CD14-positive monocyte (primary cell): ENCODE measurements at regions of chr17 and their contacts with region 1.

Region 1: DNA sequence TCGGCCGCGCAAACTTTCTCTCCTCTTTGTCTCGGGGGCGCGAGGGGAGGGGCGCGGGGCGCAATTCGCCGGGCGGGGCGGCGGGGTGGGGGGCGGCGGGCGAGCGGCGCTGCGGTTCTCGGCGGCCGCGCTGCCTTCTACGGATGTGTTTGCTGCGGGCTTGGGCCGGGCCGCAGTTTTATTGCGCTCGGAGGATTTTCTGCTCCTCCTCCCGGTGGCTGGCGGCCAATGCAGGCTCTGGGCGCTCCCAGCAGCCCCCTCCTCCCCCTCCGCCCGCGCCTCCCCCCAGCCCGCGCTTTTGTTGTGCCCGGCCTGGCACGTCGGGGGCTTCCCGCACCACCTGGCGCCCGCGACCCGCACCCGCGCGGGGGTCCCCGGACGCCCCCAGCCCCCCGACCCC is at the start of gene TIMP2:
- DNase-seq: peak; percentile 80 to 83 (median 80)
- H3K4me3 ChIP-seq: peak within 1 kb of the TSS; percentile 75 to 96 (median 91)
- H3K4me3 Mint-ChIP-seq: peak within 1 kb of the TSS; percentile 94 to 95
- H3K27ac ChIP-seq: peak within 1 kb of the TSS; percentile 82 to 86
- H3K27ac Mint-ChIP-seq: peak within 1 kb of the TSS; percentile 91 to 98 (median 95)
- H3K4me1 ChIP-seq: peaks cover 40 to 45% of the 10 kb centered on the region in 2 donors
- H3K4me1 Mint-ChIP-seq: peaks cover 42% of the 10 kb centered on the region
- H3K27me3 ChIP-seq: no peaks in the 10 kb centered on the region
- H3K27me3 Mint-ChIP-seq: peaks cover 1 to 5% (median 4%) of the 10 kb centered on the region in 3 donors
- CTCF ChIP-seq: peak; percentile 63
- polyA plus RNA-seq, gene TIMP2: 4.5 to 101 (median 6.4) TPM

Region 2: DNA sequence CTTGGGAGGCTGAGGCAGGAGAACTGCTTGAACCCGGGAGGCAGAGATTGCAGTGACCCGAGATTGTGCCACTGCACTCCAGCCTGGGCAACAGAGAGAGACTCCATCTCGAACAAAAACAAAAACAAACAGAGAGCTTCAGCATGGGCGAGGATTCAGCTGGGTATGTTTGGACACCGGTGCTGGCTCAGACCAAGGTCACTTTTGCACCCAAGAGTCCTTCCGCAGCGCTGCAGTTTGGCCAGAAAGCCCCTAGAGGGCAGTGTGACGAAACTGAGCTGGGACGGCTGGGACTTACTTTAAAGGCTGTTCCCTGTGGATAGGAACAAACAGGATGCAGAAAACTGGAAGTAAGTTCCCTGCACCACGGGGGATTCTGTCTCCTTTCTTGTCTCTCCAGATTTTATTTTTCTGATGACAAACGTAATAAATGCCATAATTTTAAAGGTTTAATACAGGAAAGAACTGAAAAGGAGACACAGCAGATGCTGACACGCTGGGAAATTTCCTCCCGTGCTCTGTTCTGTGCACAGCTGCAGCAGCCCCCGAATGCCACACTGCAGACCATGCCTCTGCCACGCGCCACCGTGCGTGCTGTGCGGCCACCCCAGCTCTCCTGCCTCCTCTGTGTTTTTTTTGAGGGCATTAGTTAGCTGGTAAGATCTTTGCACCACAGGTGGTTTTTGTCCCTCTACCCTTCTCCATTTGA is 59.4 kb before region 1 on chr17:
- intact Hi-C with region 1: loop called (anchors 2 to 5 kb)
- DNase-seq: peak; percentile 64 to 78 (median 78)
- H3K4me3 ChIP-seq: no peak overlapping the region
- H3K4me3 Mint-ChIP-seq: no peak overlapping the region
- H3K27ac ChIP-seq: peak overlapping the region; percentile 81 to 84
- H3K27ac Mint-ChIP-seq: peak overlapping the region; percentile 64 to 96 (median 92)
- H3K4me1 ChIP-seq: peaks cover 41 to 71% of the 10 kb centered on the region in 2 donors
- H3K4me1 Mint-ChIP-seq: peaks cover 50% of the 10 kb centered on the region
- H3K27me3 ChIP-seq: no peaks in the 10 kb centered on the region
- H3K27me3 Mint-ChIP-seq: peaks cover 0 to 2% (median 1%) of the 10 kb centered on the region in 3 donors
- CTCF ChIP-seq: peak; percentile 92

Region 3: GRCh38 chr17:78883164-78884122 is 41.8 kb before region 1 on chr17:
- intact Hi-C with region 1: loop called in 1 of 2 experiments (anchors 5 kb)
- DNase-seq: peak; percentile 96 to 98 (median 97)
- H3K4me3 ChIP-seq: peak overlapping the region in 2 of 3 experiments; percentile 14 to 59
- H3K4me3 Mint-ChIP-seq: peak overlapping the region; percentile 70 to 79
- H3K27ac ChIP-seq: peak overlapping the region; percentile 96 to 98
- H3K27ac Mint-ChIP-seq: peak overlapping the region; percentile 97 to 99 (median 98)
- H3K4me1 ChIP-seq: peaks cover 73 to 89% of the 10 kb centered on the region in 2 donors
- H3K4me1 Mint-ChIP-seq: peaks cover 75% of the 10 kb centered on the region
- H3K27me3 ChIP-seq: no peaks in the 10 kb centered on the region
- H3K27me3 Mint-ChIP-seq: peaks cover 0 to 2% (median 2%) of the 10 kb centered on the region in 3 donors
- CTCF ChIP-seq: peak; percentile 8

Region 4: DNA sequence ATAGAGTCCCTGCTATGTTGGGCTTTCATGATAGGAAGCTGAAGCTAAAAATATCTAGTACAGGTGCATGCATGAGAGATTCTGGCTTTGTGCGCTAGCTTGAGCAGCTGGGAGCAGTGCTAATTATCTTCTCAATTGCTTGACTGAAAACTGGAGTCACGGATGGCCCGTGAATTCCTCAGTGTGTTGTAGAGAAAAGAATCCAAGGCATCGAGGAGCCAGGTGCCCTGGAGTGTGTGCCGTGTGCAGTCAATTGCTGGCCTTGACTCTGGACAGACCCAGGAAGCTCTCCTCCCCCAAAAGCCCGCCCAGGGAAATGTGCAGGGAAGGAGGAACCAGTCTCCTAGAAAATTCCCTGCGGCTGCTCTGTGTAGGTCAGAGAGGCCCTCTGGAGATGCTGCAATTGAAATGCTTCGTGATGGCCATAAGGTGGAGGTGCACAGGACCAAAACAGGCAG is 40.3 kb after region 1 on chr17:
- intact Hi-C with region 1: loop called (anchors 5 kb)
- DNase-seq: no peak
- H3K4me3 ChIP-seq: no peak overlapping the region
- H3K4me3 Mint-ChIP-seq: peak overlapping the region in 1 of 2 donors; percentile 37
- H3K27ac ChIP-seq: no peak overlapping the region
- H3K27ac Mint-ChIP-seq: no peak overlapping the region
- H3K4me1 ChIP-seq: no peaks in the 10 kb centered on the region
- H3K4me1 Mint-ChIP-seq: peaks cover 8% of the 10 kb centered on the region
- H3K27me3 ChIP-seq: no peaks in the 10 kb centered on the region
- H3K27me3 Mint-ChIP-seq: peaks cover 0 to 4% (median 2%) of the 10 kb centered on the region in 3 donors
- CTCF ChIP-seq: no peak

Region 5: GRCh38 chr17:78970834-78971773 is 45.9 kb after region 1 on chr17:
- intact Hi-C with region 1: loop called (anchors 5 kb)
- DNase-seq: peak; percentile 70 to 78 (median 78)
- H3K4me3 ChIP-seq: no peak overlapping the region
- H3K4me3 Mint-ChIP-seq: peak overlapping the region; percentile 51 to 57
- H3K27ac ChIP-seq: no peak overlapping the region
- H3K27ac Mint-ChIP-seq: peak overlapping the region in 6 of 7 donors; percentile 36 to 82 (median 56)
- H3K4me1 ChIP-seq: peaks cover 4 to 8% of the 10 kb centered on the region in 2 donors
- H3K4me1 Mint-ChIP-seq: peaks cover 15% of the 10 kb centered on the region
- H3K27me3 ChIP-seq: no peaks in the 10 kb centered on the region
- H3K27me3 Mint-ChIP-seq: peaks cover 1 to 2% (median 2%) of the 10 kb centered on the region in 3 donors
- CTCF ChIP-seq: peak; percentile 91